A549 (cell line): ENCODE measurements at regions of chr9 and their contacts with region 1.

Region 1: GRCh38 chr9:2132484-2133082 is 117.4 kb downstream of the SMARCA2 start:
- DNase-seq: peak; percentile 27 to 34
- ATAC-seq: 0 out of 6 replicates have a peak, but pooled peaks of 1 of the 2 experiments have one; percentile 43
- H3K4me3 ChIP-seq: no peak overlapping the region
- H3K27ac ChIP-seq: no peak overlapping the region
- H3K4me1 ChIP-seq: no peaks in the 10 kb centered on the region
- CTCF ChIP-seq: peak; percentile 78
- EP300 ChIP-seq: no peak
- POLR2A ChIP-seq: no peak
- RAD21 ChIP-seq: peak; percentile 77 to 87

Region 2: DNA sequence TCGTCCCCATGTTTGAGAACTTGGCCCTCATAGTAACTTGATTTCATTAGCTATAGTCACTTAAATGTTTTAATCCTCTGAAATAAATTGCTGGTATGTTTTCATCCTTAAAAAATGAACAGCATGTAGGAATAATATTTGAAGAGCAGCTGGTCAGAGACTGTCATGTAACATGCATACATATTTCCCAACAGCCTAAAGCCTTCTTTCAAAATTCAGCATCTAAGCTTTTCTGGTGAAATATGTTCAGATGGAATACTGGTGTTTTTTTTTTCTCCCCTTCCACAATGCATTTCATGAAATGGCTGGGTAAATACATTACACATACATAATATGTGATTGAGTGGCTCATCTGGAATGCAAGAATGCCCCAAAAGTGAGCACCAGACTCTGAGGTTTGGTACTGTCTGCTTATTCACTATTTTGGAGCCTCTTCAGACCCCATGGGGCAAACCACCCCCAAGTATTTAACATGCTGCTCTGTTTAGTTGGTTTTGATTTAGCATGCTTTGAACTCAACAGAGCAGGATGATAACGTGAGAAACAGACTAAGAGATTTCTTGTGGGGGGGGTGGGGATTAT is 23.4 kb before region 1 on chr9:
- CTCF ChIA-PET with region 1: no interaction called
- POLR2A ChIA-PET with region 1: no interaction called
- DNase-seq: no peak
- ATAC-seq: no peak
- H3K4me3 ChIP-seq: no peak overlapping the region
- H3K27ac ChIP-seq: no peak overlapping the region
- H3K4me1 ChIP-seq: no peaks in the 10 kb centered on the region
- CTCF ChIP-seq: no peak
- EP300 ChIP-seq: no peak
- POLR2A ChIP-seq: no peak
- RAD21 ChIP-seq: no peak

Region 3: GRCh38 chr9:2120926-2121689 is 11.5 kb before region 1 on chr9:
- CTCF ChIA-PET with region 1: interaction called, 21 read pairs
- POLR2A ChIA-PET with region 1: no interaction called
- DNase-seq: no peak
- ATAC-seq: no peak
- H3K4me3 ChIP-seq: no peak overlapping the region
- H3K27ac ChIP-seq: no peak overlapping the region
- H3K4me1 ChIP-seq: no peaks in the 10 kb centered on the region
- CTCF ChIP-seq: no peak
- EP300 ChIP-seq: no peak
- POLR2A ChIP-seq: no peak
- RAD21 ChIP-seq: no peak

Region 4: GRCh38 chr9:2597483-2597882 is 464.9 kb after region 1 on chr9:
- CTCF ChIA-PET with region 1: interaction called, 12 read pairs
- POLR2A ChIA-PET with region 1: no interaction called
- DNase-seq: no peak
- ATAC-seq: peak in 1 of 2 experiments; percentile 34; a peak in 2 of 6 replicates
- H3K4me3 ChIP-seq: no peak overlapping the region
- H3K27ac ChIP-seq: no peak overlapping the region
- H3K4me1 ChIP-seq: peaks cover 5% of the 10 kb centered on the region
- CTCF ChIP-seq: no peak
- EP300 ChIP-seq: no peak
- POLR2A ChIP-seq: no peak
- RAD21 ChIP-seq: no peak

Region 5: DNA sequence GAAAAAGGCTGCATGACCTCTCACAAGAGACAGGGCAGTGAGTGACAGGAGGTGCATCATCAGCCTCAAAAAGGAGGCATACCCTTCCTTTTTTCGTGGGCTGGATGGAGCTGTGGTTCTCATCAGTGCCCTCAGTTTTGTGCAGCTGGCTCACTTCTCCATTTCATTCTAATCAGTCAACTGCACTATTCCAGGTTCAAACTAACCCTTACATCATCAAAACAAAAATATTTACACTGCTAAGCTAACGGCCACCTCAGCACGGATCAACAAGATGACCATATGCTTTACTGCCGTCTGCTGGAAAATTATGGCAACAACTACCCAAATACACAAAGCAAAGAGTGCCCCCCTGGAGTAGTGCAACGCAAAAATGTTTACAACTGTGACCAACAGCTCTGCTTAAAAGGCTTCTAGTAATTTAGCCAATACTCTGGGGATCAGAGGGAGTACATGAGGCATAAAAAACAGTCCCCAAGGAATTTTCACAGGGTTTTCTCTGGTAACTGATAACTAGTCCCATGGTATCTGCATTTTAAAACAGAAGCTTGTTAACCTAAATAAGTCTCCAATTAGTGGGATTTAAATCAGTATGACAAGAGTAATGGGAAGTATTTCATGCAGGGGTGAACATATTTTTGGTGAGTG is 595.5 kb after region 1 on chr9:
- CTCF ChIA-PET with region 1: interaction called, 11 read pairs
- POLR2A ChIA-PET with region 1: no interaction called
- DNase-seq: peak in 1 of 2 experiments; percentile 69
- ATAC-seq: peak; percentile 78 to 93; a peak in 5 of 6 replicates
- H3K4me3 ChIP-seq: no peak overlapping the region
- H3K27ac ChIP-seq: peak overlapping the region in 1 of 2 experiments; percentile 62; a peak in 3 of 6 replicates
- H3K4me1 ChIP-seq: peaks cover 31% of the 10 kb centered on the region
- CTCF ChIP-seq: peak; percentile 78
- EP300 ChIP-seq: no peak
- POLR2A ChIP-seq: no peak
- RAD21 ChIP-seq: peak; percentile 69 to 76

Region 6: GRCh38 chr9:2837915-2838314 is 705.3 kb after region 1 on chr9:
- CTCF ChIA-PET with region 1: interaction called, 28 read pairs
- POLR2A ChIA-PET with region 1: no interaction called
- DNase-seq: peak; percentile 11 to 25
- ATAC-seq: peak; percentile 47 to 62; a peak in 2 of 6 replicates
- H3K4me3 ChIP-seq: 0 out of 3 replicates have a peak overlapping the region, but pooled peaks have one; percentile 22
- H3K27ac ChIP-seq: peak overlapping the region in 1 of 2 experiments; percentile 64; a peak in 4 of 6 replicates
- H3K4me1 ChIP-seq: peaks cover 53% of the 10 kb centered on the region
- CTCF ChIP-seq: peak; percentile 52
- EP300 ChIP-seq: no peak
- POLR2A ChIP-seq: no peak
- RAD21 ChIP-seq: peak; percentile 44 to 74